ENCODE measurements at regions of chr1 and their contacts with region 1.

Region 1: DNA sequence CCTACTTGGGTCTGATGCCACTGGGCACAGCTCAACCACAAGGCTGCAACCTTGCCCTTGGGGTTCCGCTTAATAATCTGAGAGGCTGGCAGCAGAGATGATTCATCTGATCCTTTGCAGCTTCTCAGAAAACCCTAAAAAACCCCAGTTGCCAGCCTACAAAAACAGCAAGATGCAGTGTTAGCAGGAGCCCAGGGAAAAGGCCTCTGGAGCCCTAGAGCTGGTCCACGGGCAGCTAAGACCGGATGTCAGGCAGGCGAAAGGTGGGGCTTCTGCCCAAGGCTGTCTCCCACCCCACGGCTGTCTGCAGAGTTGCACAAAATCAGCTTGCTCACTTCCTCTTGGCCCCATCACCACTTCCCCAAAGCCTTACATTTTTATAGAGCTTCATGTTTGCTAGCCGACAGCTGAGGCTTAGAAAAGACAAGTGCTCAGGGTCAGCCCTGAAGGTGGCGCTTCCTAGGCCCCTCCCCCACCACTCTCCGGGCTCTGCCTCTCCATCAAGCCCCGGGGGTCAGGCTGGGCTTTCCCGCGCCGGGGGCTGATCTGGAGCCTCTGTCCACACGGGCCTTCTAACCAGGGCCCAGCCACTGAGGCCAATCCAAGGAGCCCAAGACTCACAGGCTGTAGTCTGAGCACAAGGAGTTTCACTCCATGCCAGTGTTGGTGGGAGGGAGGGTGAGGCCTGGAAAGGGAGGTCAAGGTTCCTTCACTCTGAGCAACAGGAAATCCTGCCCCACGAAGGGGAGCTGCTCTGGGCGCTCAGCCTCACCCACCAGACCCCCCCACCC is 4.2 kb upstream of the ADORA3 start:
- DNase-seq: peak; percentile 77
- ATAC-seq: peak; percentile 67
- H3K4me3 Mint-ChIP-seq: peak overlapping the region; percentile 50
- H3K27ac Mint-ChIP-seq: peak overlapping the region; percentile 93
- H3K4me1 Mint-ChIP-seq: peaks cover 59% of the 10 kb centered on the region
- H3K27me3 Mint-ChIP-seq: no peaks in the 10 kb centered on the region

Region 2: DNA sequence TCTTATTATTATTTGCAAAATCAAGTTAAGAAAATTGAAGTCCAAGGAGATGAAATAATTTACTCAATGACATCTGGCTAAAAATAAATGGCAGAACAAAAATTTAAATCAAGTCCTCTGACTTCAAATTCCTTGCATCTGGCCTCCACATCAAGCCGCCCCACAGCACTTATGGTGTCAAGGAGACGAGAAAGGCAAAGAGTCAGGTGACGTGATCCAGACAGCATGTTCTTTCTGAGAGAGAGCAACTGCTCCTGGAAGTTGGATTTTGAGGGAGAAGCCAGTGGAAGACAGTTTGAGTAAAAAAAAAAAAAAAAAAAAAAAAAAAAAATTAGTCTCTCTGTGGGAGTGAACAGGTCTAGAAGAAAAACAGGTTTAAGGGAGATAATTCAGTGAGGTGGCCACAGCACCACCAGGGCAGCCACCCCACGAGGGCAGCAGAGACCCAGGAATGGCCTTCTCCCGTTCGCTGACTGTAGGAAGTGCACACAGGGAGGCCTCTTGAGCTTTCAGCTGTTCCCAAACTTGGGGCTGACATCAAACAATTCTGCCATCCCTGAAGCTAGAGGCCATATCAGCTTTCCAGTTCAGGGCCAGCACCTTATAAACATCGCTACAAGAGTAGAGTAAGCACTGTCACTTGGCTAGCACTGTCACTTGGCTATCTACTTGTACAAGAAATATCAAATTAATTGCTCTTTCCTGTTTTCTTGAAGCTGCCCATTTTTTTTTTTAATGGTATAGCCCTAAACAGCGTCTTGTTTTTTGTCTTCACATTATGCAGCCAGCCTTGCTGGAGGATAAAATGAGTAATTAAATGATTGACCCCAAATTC is 26.0 kb before region 1 on chr1:
- CTCF ChIA-PET with region 1: interaction called, 71 read pairs
- POLR2A ChIA-PET with region 1: no interaction called
- intact Hi-C with region 1: loop called (anchors 1 to 2 kb)
- DNase-seq: peak; percentile 83
- ATAC-seq: peak; percentile 80
- H3K4me3 Mint-ChIP-seq: no peak overlapping the region
- H3K27ac Mint-ChIP-seq: no peak overlapping the region
- H3K4me1 Mint-ChIP-seq: peaks cover 24% of the 10 kb centered on the region
- H3K27me3 Mint-ChIP-seq: no peaks in the 10 kb centered on the region

Region 3: GRCh38 chr1:111592389-111593361 is 85.1 kb after region 1 on chr1:
- CTCF ChIA-PET with region 1: interaction called, 20 read pairs
- POLR2A ChIA-PET with region 1: interaction called, 8 read pairs
- intact Hi-C with region 1: loop called (anchors 1 to 2 kb)
- DNase-seq: peak; percentile 98
- ATAC-seq: peak; percentile 93
- H3K4me3 Mint-ChIP-seq: peak overlapping the region; percentile 63
- H3K27ac Mint-ChIP-seq: peak overlapping the region; percentile 95
- H3K4me1 Mint-ChIP-seq: peaks cover 73% of the 10 kb centered on the region
- H3K27me3 Mint-ChIP-seq: no peaks in the 10 kb centered on the region

Region 4: GRCh38 chr1:111647736-111648135 is 140.1 kb after region 1 on chr1:
- CTCF ChIA-PET with region 1: interaction called, 10 read pairs
- POLR2A ChIA-PET with region 1: interaction called, 3 read pairs
- intact Hi-C with region 1: no loop called
- DNase-seq: no peak
- ATAC-seq: peak; percentile 84
- H3K4me3 Mint-ChIP-seq: no peak overlapping the region
- H3K27ac Mint-ChIP-seq: peak overlapping the region; percentile 82
- H3K4me1 Mint-ChIP-seq: peaks cover 74% of the 10 kb centered on the region
- H3K27me3 Mint-ChIP-seq: no peaks in the 10 kb centered on the region

Region 5: GRCh38 chr1:111704776-111705175 is 197.2 kb after region 1 on chr1:
- CTCF ChIA-PET with region 1: interaction called, 14 read pairs
- POLR2A ChIA-PET with region 1: no interaction called
- intact Hi-C with region 1: no loop called
- DNase-seq: no peak
- ATAC-seq: peak; percentile 65
- H3K4me3 Mint-ChIP-seq: no peak overlapping the region
- H3K27ac Mint-ChIP-seq: peak overlapping the region; percentile 44
- H3K4me1 Mint-ChIP-seq: peaks cover 51% of the 10 kb centered on the region
- H3K27me3 Mint-ChIP-seq: no peaks in the 10 kb centered on the region

Region 6: DNA sequence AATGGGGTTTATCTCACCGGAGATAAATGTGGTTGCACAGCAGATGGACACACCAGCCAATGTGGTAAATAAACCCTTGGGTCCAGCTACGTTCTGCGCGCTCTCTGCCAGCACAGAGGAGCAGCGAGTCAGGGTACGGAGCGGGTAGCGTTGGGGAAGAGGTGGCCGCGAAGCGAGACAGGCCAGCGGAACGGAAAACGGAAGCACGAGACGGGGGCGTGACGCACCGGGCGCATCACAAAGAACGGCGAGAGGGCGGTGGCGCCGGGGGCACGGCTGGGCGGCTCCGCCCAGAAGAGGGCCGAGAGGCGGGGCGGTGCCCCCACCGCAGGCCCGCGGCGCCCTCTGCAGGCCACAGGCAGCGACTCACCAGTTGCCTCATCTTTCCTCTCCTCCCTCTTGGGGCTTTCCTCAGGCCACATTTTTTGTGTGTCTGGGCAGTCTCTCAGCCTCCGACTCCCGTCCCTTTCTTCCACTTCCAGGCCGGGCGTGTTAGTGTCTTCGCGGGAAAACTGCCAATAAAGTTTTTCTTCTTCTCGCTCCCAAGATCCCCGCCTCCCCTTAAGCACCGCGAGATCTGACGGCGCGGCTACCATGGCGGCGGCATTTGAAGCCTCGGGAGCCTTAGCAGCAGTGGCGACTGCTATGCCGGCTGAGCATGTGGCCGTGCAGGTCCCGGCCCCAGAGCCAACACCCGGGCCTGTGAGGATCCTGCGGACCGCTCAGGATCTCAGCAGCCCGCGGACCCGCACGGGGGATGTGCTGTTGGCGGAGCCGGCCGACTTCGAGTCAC is 247.9 kb after region 1 on chr1 and contains the start of gene DDX20:
- CTCF ChIA-PET with region 1: interaction called, 11 read pairs
- POLR2A ChIA-PET with region 1: interaction called, 5 read pairs
- intact Hi-C with region 1: loop called (anchors 1 to 2 kb)
- DNase-seq: peak; percentile 97
- ATAC-seq: peak; percentile 90
- H3K4me3 Mint-ChIP-seq: peak within 1 kb of the TSS; percentile 83
- H3K27ac Mint-ChIP-seq: peak within 1 kb of the TSS; percentile 98
- H3K4me1 Mint-ChIP-seq: peaks cover 35% of the 10 kb centered on the region
- H3K27me3 Mint-ChIP-seq: no peaks in the 10 kb centered on the region
- total RNA-seq, gene DDX20: 13.5 to 13.6 TPM